CD14-positive monocyte (primary cell): ENCODE measurements at regions of chr15 and their contacts with region 1.

Region 1: DNA sequence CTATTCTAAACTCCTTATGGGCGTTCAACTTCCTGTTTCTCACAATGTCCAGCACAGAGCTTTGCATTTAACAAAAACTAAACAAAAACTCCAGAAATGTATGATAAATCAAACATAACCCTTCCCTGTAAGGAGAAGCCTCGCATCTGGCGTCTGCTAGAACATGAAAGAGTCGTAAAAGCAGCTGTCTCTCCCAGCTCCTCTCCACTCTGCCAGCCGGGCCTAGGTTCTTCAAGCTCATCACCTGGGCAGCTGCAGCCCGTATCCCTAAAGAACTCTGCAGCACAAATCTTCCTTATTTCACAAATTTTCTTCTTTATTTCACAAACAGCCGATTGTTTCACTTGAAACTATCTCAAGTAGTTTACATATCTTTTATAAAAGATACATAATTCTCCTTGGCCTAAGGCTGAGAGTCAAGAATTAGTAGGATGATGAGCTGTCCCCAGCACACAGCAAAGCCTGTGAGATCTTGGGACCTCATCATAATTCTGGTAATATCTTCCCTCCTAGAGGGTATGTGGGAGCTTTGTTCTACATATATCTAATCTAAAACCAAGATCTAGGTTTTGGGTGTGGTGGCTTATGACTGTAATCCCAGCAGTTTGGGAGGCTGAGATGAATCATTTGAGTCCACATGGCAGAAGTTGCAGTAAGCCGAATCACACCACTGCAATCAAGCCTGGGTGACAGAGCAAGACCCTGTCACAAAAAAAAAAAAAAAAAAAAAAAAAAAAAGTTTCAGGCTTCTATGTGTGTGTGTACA is 35.3 kb downstream of the ANXA2 start:
- DNase-seq: peak in 2 of 3 donors; percentile 10 to 41
- H3K4me3 ChIP-seq: no peak overlapping the region
- H3K4me3 Mint-ChIP-seq: no peak overlapping the region
- H3K27ac ChIP-seq: peak overlapping the region in 1 of 2 donors; percentile 58
- H3K27ac Mint-ChIP-seq: peak overlapping the region; percentile 27 to 87 (median 66)
- H3K4me1 ChIP-seq: no peaks in the 10 kb centered on the region
- H3K4me1 Mint-ChIP-seq: peaks cover 6% of the 10 kb centered on the region
- H3K27me3 ChIP-seq: no peaks in the 10 kb centered on the region
- H3K27me3 Mint-ChIP-seq: no peaks in the 10 kb centered on the region
- CTCF ChIP-seq: no peak

Region 2: GRCh38 chr15:60444289-60444912 is 81.9 kb after region 1 on chr15:
- intact Hi-C with region 1: loop called (anchors 5 kb)
- DNase-seq: peak in 1 of 3 donors; percentile 18
- H3K4me3 ChIP-seq: no peak overlapping the region
- H3K4me3 Mint-ChIP-seq: no peak overlapping the region
- H3K27ac ChIP-seq: no peak overlapping the region
- H3K27ac Mint-ChIP-seq: peak overlapping the region in 1 of 7 donors; percentile 35
- H3K4me1 ChIP-seq: peaks cover 0 to 4% of the 10 kb centered on the region in 2 donors
- H3K4me1 Mint-ChIP-seq: no peaks in the 10 kb centered on the region
- H3K27me3 ChIP-seq: no peaks in the 10 kb centered on the region
- H3K27me3 Mint-ChIP-seq: no peaks in the 10 kb centered on the region
- CTCF ChIP-seq: peak; percentile 67

Region 3: GRCh38 chr15:60520825-60521368 is 158.4 kb after region 1 on chr15:
- intact Hi-C with region 1: loop called in 1 of 2 experiments (anchors 5 kb)
- DNase-seq: peak; percentile 53 to 60 (median 58)
- H3K4me3 ChIP-seq: no peak overlapping the region
- H3K4me3 Mint-ChIP-seq: no peak overlapping the region
- H3K27ac ChIP-seq: no peak overlapping the region
- H3K27ac Mint-ChIP-seq: no peak overlapping the region
- H3K4me1 ChIP-seq: no peaks in the 10 kb centered on the region
- H3K4me1 Mint-ChIP-seq: peaks cover 3% of the 10 kb centered on the region
- H3K27me3 ChIP-seq: no peaks in the 10 kb centered on the region
- H3K27me3 Mint-ChIP-seq: no peaks in the 10 kb centered on the region
- CTCF ChIP-seq: peak; percentile 93

Region 4: GRCh38 chr15:60563539-60564404 is 201.3 kb after region 1 on chr15:
- intact Hi-C with region 1: no loop called
- DNase-seq: no peak
- H3K4me3 ChIP-seq: no peak overlapping the region
- H3K4me3 Mint-ChIP-seq: no peak overlapping the region
- H3K27ac ChIP-seq: no peak overlapping the region
- H3K27ac Mint-ChIP-seq: no peak overlapping the region
- H3K4me1 ChIP-seq: no peaks in the 10 kb centered on the region
- H3K4me1 Mint-ChIP-seq: no peaks in the 10 kb centered on the region
- H3K27me3 ChIP-seq: no peaks in the 10 kb centered on the region
- H3K27me3 Mint-ChIP-seq: peaks cover 0 to 5% (median 0%) of the 10 kb centered on the region in 3 donors
- CTCF ChIP-seq: no peak

Region 5: DNA sequence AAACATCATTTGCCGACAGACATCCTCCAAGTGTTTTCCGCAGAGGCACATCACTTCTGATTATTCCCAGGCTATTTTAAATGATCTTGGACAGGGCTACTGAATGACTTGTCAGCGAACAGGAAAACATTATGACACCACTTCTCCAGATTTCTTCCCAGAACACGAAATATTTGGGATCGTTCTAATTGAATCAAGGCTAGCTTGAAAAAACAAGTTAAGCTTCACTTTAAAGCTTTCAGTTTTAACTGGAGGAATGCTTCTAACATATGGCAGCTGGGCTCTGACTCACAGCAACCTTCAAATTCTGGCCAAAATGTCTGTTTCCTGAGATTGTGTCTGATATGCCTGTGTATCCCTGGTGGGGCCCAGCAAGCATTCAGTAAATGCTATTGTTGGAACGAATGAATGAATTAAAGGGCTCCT is 243.4 kb after region 1 on chr15:
- intact Hi-C with region 1: no loop called
- DNase-seq: no peak
- H3K4me3 ChIP-seq: no peak overlapping the region
- H3K4me3 Mint-ChIP-seq: no peak overlapping the region
- H3K27ac ChIP-seq: no peak overlapping the region
- H3K27ac Mint-ChIP-seq: no peak overlapping the region
- H3K4me1 ChIP-seq: no peaks in the 10 kb centered on the region
- H3K4me1 Mint-ChIP-seq: no peaks in the 10 kb centered on the region
- H3K27me3 ChIP-seq: peaks cover 5 to 12% of the 10 kb centered on the region in 2 donors
- H3K27me3 Mint-ChIP-seq: peaks cover 4 to 22% (median 8%) of the 10 kb centered on the region in 3 donors
- CTCF ChIP-seq: no peak